Colonic mucosa (tissue), 4 donors: ENCODE measurements at regions of chr5 and their contacts with region 1.

Region 1: GRCh38 chr5:79702606-79703382 is 13.2 kb downstream of the CMYA5 start:
- DNase-seq: no peak
- H3K4me3 ChIP-seq: no peak overlapping the region
- H3K27ac ChIP-seq: no peak overlapping the region
- H3K4me1 ChIP-seq: no peaks in the 10 kb centered on the region
- H3K27me3 ChIP-seq: no peaks in the 10 kb centered on the region
- CTCF ChIP-seq: no peak

Region 2: DNA sequence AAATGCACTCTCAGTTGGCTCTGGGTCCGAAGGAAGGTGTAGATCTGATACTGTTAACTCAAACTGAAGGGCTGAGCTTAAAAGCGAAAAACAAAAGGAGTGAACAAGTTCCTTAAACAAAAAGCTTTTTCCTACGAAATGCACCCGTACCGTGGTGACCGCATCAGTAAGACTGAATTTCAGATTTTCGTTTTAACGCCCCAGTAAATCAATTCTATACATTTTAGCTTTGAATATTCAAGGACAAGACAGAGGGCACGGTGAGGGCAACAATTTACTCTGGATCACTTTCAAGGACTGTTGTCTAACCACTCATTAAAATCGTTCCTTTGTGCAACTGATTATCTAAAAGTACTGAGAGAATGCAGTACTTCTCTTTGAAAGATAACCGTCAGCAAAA is 190.7 kb before region 1 on chr5:
- intact Hi-C with region 1: no loop called
- DNase-seq: no peak
- H3K4me3 ChIP-seq: no peak overlapping the region
- H3K27ac ChIP-seq: no peak overlapping the region
- H3K4me1 ChIP-seq: no peaks in the 10 kb centered on the region
- H3K27me3 ChIP-seq: peaks cover 18% of the 10 kb centered on the region
- CTCF ChIP-seq: no peak

Region 3: GRCh38 chr5:79857714-79858409 is 155.1 kb after region 1 on chr5:
- intact Hi-C with region 1: loop called (anchors 2 kb)
- DNase-seq: peak; percentile 77
- H3K4me3 ChIP-seq: no peak overlapping the region
- H3K27ac ChIP-seq: no peak overlapping the region
- H3K4me1 ChIP-seq: no peaks in the 10 kb centered on the region
- H3K27me3 ChIP-seq: no peaks in the 10 kb centered on the region
- CTCF ChIP-seq: peak; percentile 95

Region 4: DNA sequence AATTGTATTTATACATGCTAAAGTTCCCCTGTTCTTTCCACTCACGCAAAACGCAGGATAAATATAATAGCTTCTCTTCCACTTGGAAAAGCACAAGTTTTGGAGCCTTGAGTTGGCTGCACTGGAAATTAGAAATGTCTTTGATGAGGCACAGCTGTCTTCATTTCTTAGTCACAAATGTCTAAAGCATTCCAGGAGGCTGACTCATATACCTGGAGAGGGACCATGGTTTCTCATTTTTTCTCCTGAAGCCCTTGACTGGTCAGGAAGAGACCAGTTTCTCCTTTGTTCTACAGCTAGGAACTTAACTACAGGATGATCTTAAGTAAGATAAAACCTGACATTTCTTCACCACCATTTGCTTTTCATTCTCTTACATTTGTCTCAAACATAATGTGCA is 272.1 kb after region 1 on chr5:
- intact Hi-C with region 1: no loop called
- DNase-seq: no peak
- H3K4me3 ChIP-seq: no peak overlapping the region
- H3K27ac ChIP-seq: no peak overlapping the region
- H3K4me1 ChIP-seq: no peaks in the 10 kb centered on the region
- H3K27me3 ChIP-seq: no peaks in the 10 kb centered on the region
- CTCF ChIP-seq: no peak